MCF 10A (cell line): ENCODE measurements at regions of chr12 and their contacts with region 1.

Region 1: GRCh38 chr12:59113831-59114615 is 193.7 kb upstream of the LRIG3 start:
- DNase-seq: peak; percentile 87
- H3K4me3 Mint-ChIP-seq: no peak overlapping the region
- H3K27ac Mint-ChIP-seq: no peak overlapping the region
- H3K4me1 Mint-ChIP-seq: no peaks in the 10 kb centered on the region
- H3K27me3 Mint-ChIP-seq: no peaks in the 10 kb centered on the region
- CTCF ChIP-seq: peak; percentile 90

Region 2: GRCh38 chr12:59100585-59100984 is 13.4 kb before region 1 on chr12:
- CTCF ChIA-PET with region 1: interaction called, 20 read pairs
- POLR2A ChIA-PET with region 1: interaction called, 3 read pairs
- intact Hi-C with region 1: no loop called
- DNase-seq: no peak
- H3K4me3 Mint-ChIP-seq: no peak overlapping the region
- H3K27ac Mint-ChIP-seq: no peak overlapping the region
- H3K4me1 Mint-ChIP-seq: peaks cover 5% of the 10 kb centered on the region
- H3K27me3 Mint-ChIP-seq: no peaks in the 10 kb centered on the region
- CTCF ChIP-seq: no peak

Region 3: GRCh38 chr12:59131462-59131861 is 17.4 kb after region 1 on chr12:
- CTCF ChIA-PET with region 1: interaction called, 15 read pairs
- POLR2A ChIA-PET with region 1: no interaction called
- intact Hi-C with region 1: no loop called
- DNase-seq: no peak
- H3K4me3 Mint-ChIP-seq: no peak overlapping the region
- H3K27ac Mint-ChIP-seq: no peak overlapping the region
- H3K4me1 Mint-ChIP-seq: no peaks in the 10 kb centered on the region
- H3K27me3 Mint-ChIP-seq: no peaks in the 10 kb centered on the region
- CTCF ChIP-seq: no peak

Region 4: DNA sequence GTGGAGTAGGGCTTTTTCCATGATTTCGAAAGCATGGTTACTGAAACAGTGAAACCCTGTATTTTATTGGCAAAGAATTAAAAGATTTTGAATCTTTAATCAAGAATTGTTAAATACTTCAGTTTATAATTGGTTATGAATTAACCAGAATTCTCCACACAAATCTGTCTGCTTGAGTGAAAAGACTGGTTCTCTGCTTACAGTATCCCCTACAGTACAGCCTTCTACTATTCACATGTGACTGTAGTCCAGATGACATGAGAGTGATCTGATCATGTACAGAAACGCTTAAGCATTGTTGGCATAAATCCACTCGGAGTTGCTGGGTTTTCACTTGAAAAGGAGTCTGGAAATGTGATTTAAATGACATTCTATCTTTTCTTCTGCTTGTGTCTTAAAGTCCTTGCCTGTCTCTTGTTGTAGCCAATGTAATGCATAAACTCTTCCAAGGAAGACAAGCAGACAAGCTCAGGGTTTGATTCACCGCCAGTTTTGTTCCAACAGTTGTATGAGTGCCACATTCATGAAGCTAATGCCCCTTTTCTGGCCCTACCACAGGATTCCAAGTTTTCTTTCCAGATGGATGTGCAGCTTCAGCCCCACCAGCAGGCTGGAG is 28.3 kb after region 1 on chr12:
- CTCF ChIA-PET with region 1: interaction called, 27 read pairs
- POLR2A ChIA-PET with region 1: no interaction called
- intact Hi-C with region 1: no loop called
- DNase-seq: no peak
- H3K4me3 Mint-ChIP-seq: no peak overlapping the region
- H3K27ac Mint-ChIP-seq: no peak overlapping the region
- H3K4me1 Mint-ChIP-seq: no peaks in the 10 kb centered on the region
- H3K27me3 Mint-ChIP-seq: no peaks in the 10 kb centered on the region
- CTCF ChIP-seq: no peak

Region 5: DNA sequence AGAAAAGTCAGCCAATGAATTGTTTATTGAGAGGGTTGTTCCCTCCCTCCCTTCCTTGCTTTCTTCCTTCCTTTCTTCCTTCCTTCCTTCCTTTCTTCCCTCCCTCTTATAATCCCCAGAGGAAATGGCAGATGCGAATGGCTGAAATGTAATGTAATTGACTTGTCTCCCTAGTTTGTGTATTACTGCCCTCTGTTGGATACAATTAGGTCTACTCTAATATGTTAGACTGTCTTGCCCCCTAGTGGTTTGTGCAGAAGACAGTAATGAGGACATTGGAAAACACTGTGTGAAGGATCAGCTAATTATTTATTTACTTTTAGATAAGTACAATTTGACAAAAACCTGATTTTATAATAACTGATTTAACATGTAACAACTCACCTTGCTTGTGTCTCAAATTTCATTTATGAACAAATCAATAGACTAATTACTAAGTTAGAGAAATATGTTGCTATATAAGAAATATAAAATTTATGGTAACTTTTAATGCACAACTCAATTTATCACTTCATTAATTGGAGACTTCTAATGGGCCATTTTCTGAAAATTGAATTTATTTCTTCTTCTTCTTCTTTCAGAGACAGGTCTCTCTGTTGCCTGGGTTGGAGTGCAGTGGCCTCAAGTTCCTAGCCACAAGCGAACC is 36.1 kb after region 1 on chr12:
- CTCF ChIA-PET with region 1: interaction called, 81 read pairs
- POLR2A ChIA-PET with region 1: no interaction called
- intact Hi-C with region 1: loop called (anchors 1 kb)
- DNase-seq: peak; percentile 84
- H3K4me3 Mint-ChIP-seq: no peak overlapping the region
- H3K27ac Mint-ChIP-seq: no peak overlapping the region
- H3K4me1 Mint-ChIP-seq: peaks cover 11% of the 10 kb centered on the region
- H3K27me3 Mint-ChIP-seq: no peaks in the 10 kb centered on the region
- CTCF ChIP-seq: peak; percentile 91

Region 6: DNA sequence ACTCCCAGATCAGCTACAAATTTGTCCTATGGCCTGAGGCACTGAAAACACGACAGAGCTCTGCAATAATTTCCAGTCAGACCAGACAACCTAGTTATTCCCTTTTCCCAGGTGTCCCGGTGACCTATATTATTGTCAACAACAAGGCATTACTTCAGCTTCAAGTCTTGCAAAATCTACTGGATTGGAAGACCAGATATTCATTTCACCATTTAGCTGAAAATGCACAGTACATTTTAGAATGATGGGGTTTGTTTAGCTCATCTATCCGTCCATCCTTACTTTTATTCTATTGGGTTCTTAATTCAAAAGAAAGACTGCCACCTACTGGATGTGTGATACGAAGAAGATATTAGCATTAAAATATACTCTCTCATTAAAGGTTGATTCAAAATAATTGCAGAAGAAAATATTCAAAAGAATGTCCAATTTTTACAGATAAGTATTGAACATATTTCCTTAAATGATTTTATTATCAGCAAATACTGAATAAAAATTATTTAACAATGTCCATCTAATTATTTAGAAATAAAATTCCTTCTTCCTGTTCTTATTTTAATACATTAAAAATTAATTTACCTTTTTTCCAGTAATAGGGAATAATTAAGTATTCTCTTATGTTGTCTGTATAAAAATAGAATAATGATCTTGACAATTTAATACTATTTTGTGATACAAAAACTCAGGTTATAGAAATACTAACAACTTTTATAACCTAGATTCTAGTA is 51.1 kb after region 1 on chr12:
- CTCF ChIA-PET with region 1: interaction called, 14 read pairs
- POLR2A ChIA-PET with region 1: no interaction called
- intact Hi-C with region 1: loop called (anchors 1 kb)
- DNase-seq: peak; percentile 56
- H3K4me3 Mint-ChIP-seq: no peak overlapping the region
- H3K27ac Mint-ChIP-seq: no peak overlapping the region
- H3K4me1 Mint-ChIP-seq: no peaks in the 10 kb centered on the region
- H3K27me3 Mint-ChIP-seq: no peaks in the 10 kb centered on the region
- CTCF ChIP-seq: peak; percentile 23